GM12878 (cell line): ENCODE measurements at regions of chr6 and their contacts with region 1.

Region 1: GRCh38 chr6:95431637-95432228 is 145.6 kb upstream of the MANEA start:
- DNase-seq: no peak
- ATAC-seq: peak; percentile 50
- H3K4me3 ChIP-seq: no peak overlapping the region
- H3K27ac ChIP-seq: no peak overlapping the region
- H3K4me1 ChIP-seq: no peaks in the 10 kb centered on the region
- H3K27me3 ChIP-seq: no peaks in the 10 kb centered on the region
- CTCF ChIP-seq: peak; percentile 38 to 57 (median 48)
- EP300 ChIP-seq: no peak
- POLR2A ChIP-seq: no peak
- RAD21 ChIP-seq: peak; percentile 72

Region 2: GRCh38 chr6:95321126-95321525 is 110.6 kb before region 1 on chr6:
- CTCF ChIA-PET with region 1: no interaction called
- POLR2A ChIA-PET with region 1: no interaction called
- RAD21 ChIA-PET with region 1: no interaction called
- SMC1A ChIA-PET with region 1: no interaction called
- in situ Hi-C with region 1: no loop called
- intact Hi-C with region 1: no loop called
- DNase-seq: no peak
- ATAC-seq: no peak
- H3K4me3 ChIP-seq: no peak overlapping the region
- H3K27ac ChIP-seq: no peak overlapping the region
- H3K4me1 ChIP-seq: no peaks in the 10 kb centered on the region
- H3K27me3 ChIP-seq: no peaks in the 10 kb centered on the region
- CTCF ChIP-seq: no peak
- EP300 ChIP-seq: no peak
- POLR2A ChIP-seq: no peak
- RAD21 ChIP-seq: no peak

Region 3: DNA sequence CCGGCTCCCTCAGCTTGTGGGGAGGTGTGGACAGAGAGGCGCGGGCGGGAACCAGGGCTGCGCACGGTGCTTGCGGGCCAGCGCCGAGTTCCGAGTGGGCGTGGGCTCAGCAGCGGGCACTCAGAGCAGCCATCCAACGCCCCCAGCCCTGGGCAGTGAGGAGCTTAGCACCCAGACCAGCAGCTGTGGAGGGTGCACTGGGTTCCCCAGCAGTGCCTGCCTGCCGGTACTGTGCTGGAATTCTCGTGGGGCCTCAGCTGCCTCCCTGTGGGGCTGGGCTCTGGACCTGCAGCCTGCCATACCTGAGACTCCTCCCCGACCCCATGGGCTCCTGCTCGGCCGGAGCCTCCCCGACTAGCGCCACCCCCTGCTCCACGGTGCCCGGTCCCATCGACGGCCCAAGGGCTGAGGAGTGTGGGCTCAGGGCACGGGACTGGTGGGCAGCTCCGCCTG is 238.3 kb after region 1 on chr6:
- CTCF ChIA-PET with region 1: no interaction called
- POLR2A ChIA-PET with region 1: no interaction called
- RAD21 ChIA-PET with region 1: no interaction called
- SMC1A ChIA-PET with region 1: no interaction called
- in situ Hi-C with region 1: no loop called
- intact Hi-C with region 1: loop called (anchors 10 kb)
- DNase-seq: no peak
- ATAC-seq: no peak
- H3K4me3 ChIP-seq: no peak overlapping the region
- H3K27ac ChIP-seq: no peak overlapping the region
- H3K4me1 ChIP-seq: no peaks in the 10 kb centered on the region
- H3K27me3 ChIP-seq: no peaks in the 10 kb centered on the region
- CTCF ChIP-seq: no peak
- EP300 ChIP-seq: no peak
- POLR2A ChIP-seq: no peak
- RAD21 ChIP-seq: no peak

Region 4: GRCh38 chr6:95866732-95867131 is 435.0 kb after region 1 on chr6:
- CTCF ChIA-PET with region 1: interaction called, 6 read pairs
- POLR2A ChIA-PET with region 1: no interaction called
- RAD21 ChIA-PET with region 1: no interaction called
- SMC1A ChIA-PET with region 1: interaction called, 5 read pairs
- in situ Hi-C with region 1: no loop called
- intact Hi-C with region 1: loop called (anchors 1 kb)
- DNase-seq: no peak
- ATAC-seq: peak; percentile 69
- H3K4me3 ChIP-seq: no peak overlapping the region
- H3K27ac ChIP-seq: no peak overlapping the region
- H3K4me1 ChIP-seq: no peaks in the 10 kb centered on the region
- H3K27me3 ChIP-seq: no peaks in the 10 kb centered on the region
- CTCF ChIP-seq: peak; percentile 32 to 56 (median 45); a peak in 4 of 6 replicates
- EP300 ChIP-seq: no peak
- POLR2A ChIP-seq: no peak
- RAD21 ChIP-seq: peak; percentile 65

Region 5: GRCh38 chr6:95923518-95923917 is 491.8 kb after region 1 on chr6:
- CTCF ChIA-PET with region 1: no interaction called
- POLR2A ChIA-PET with region 1: no interaction called
- RAD21 ChIA-PET with region 1: no interaction called
- SMC1A ChIA-PET with region 1: no interaction called
- in situ Hi-C with region 1: no loop called
- intact Hi-C with region 1: loop called (anchors 2 kb)
- DNase-seq: no peak
- ATAC-seq: peak; percentile 81
- H3K4me3 ChIP-seq: no peak overlapping the region
- H3K27ac ChIP-seq: no peak overlapping the region
- H3K4me1 ChIP-seq: no peaks in the 10 kb centered on the region
- H3K27me3 ChIP-seq: no peaks in the 10 kb centered on the region
- CTCF ChIP-seq: peak; percentile 34 to 43 (median 36); a peak in 4 of 6 replicates
- EP300 ChIP-seq: no peak
- POLR2A ChIP-seq: no peak
- RAD21 ChIP-seq: peak; percentile 53

Region 6: GRCh38 chr6:96089173-96089572 is 657.4 kb after region 1 on chr6:
- CTCF ChIA-PET with region 1: no interaction called
- POLR2A ChIA-PET with region 1: no interaction called
- RAD21 ChIA-PET with region 1: no interaction called
- SMC1A ChIA-PET with region 1: no interaction called
- in situ Hi-C with region 1: no loop called
- intact Hi-C with region 1: loop called (anchors 10 kb)
- DNase-seq: no peak
- ATAC-seq: no peak
- H3K4me3 ChIP-seq: no peak overlapping the region
- H3K27ac ChIP-seq: no peak overlapping the region
- H3K4me1 ChIP-seq: no peaks in the 10 kb centered on the region
- H3K27me3 ChIP-seq: no peaks in the 10 kb centered on the region
- CTCF ChIP-seq: peak; percentile 23 to 43 (median 28); a peak in 3 of 6 replicates
- EP300 ChIP-seq: no peak
- POLR2A ChIP-seq: no peak
- RAD21 ChIP-seq: peak; percentile 25; the same call in 1 of the 2 replicates

Region 7: GRCh38 chr6:97068211-97068610 is 1636.5 kb after region 1 on chr6:
- CTCF ChIA-PET with region 1: no interaction called
- POLR2A ChIA-PET with region 1: no interaction called
- RAD21 ChIA-PET with region 1: no interaction called
- SMC1A ChIA-PET with region 1: no interaction called
- in situ Hi-C with region 1: loop called (anchors 25 kb)
- intact Hi-C with region 1: loop called (anchors 10 kb)
- DNase-seq: no peak
- ATAC-seq: 0 out of 3 replicates have a peak, but pooled peaks have one; percentile 33
- H3K4me3 ChIP-seq: no peak overlapping the region
- H3K27ac ChIP-seq: no peak overlapping the region
- H3K4me1 ChIP-seq: no peaks in the 10 kb centered on the region
- H3K27me3 ChIP-seq: no peaks in the 10 kb centered on the region
- CTCF ChIP-seq: peak in 2 of 3 experiments; percentile 45 to 49; a peak in 4 of 6 replicates
- EP300 ChIP-seq: no peak
- POLR2A ChIP-seq: no peak
- RAD21 ChIP-seq: peak; percentile 64